Right ventricle myocardium superior (tissue), 1 donor: ENCODE measurements at regions of chr1 and their contacts with region 1.

Region 1: GRCh38 chr1:245045087-245045881 is 109.5 kb upstream of the KIF26B start:
- DNase-seq: peak; percentile 58
- ATAC-seq: peak; percentile 55

Region 2: GRCh38 chr1:244801246-244801645 is 244.0 kb before region 1 on chr1:
- intact Hi-C with region 1: loop called (anchors 2 kb)
- DNase-seq: no peak
- ATAC-seq: peak; percentile 72

Region 3: DNA sequence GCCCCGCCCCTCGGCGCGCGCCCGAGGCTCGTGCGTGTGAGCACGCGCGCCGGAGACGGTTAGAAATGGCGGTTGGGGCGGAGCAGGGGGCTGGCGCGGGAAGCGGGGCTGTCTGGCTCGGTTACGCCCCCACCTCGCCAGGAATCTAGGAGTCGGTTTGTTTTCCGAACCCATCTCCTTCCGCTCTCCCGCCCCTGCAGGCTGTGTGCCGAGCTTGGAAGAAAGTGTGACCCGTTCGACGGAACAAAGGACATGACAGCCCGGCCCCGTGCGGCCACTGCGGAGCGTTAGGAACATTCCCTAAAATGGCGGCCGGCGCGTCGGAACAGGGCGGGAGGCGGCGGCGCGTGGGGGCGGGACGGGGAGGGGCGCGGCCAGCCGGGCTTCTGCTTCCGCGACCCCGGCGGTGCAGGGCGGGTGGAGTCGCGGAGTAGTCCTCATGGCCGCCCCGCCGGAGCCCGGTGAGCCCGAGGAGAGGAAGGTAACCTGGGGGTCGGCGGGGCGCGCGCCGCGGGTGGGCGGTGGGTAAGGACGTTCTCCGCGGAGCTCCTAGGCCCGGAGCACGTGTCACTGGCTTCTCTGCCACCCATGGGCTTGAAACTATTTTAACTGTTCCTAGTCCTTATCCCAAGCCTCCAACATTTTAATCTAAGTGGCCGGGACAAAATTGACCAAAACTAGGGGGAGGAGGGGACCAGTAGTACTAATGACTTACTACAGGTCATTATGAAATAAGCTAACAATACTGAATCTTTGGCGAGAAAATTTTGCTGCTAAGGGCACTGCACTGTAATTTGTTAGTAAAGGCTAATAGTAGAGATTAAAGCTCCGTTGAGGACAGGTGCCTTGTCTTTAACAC is 209.8 kb before region 1 on chr1 and contains the start of gene COX20:
- intact Hi-C with region 1: loop called (anchors 10 kb)
- DNase-seq: peak; percentile 95
- ATAC-seq: peak; percentile 91
- total RNA-seq, gene COX20: 68.7 TPM

Region 4: DNA sequence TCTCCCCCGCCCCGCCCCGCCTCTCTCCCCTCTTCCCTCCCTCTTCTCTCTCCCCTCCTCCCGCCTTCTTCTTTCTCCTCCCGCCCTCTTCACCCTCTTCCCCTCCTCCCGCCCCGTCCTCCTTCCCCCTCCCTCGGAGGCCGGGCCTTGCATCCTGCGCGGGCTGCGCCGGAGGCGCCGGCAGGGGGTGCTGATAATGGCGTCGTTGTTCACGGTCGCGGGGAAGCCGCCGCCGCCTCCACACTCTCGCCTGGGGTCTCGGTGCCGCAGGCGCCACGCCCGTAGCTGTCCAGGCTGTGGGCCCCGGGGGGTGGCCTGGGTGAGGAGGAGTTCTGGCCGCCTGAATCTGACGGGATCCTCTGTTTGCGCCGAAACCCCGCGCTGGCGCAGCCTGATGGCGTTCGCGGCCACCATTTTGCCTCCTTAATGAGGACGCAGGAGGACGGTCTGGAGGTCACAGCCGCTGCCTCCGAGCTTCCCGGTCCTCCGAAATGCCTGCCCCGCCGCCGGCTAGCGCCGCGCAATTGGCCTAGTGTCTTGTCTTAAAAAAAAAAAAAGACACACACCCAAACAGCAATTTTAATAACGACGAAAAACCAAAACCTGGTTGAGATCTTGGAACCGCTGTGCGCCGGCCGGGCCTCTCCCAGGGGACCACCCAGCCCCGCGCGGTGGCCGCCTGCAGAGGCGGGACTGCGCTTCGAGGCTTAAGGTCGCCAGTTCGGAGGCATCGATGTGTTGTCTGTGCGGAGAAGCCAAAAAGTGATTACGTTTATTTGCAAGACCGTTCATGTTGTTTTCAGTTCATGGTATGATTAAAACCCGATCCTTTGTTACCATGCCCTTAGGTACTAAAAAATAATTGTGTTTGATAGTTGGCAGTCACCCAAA is 74.4 kb before region 1 on chr1:
- intact Hi-C with region 1: loop called (anchors 5 kb)
- DNase-seq: peak; percentile 96
- ATAC-seq: peak; percentile 85